ENCODE measurements at regions of chr14 and their contacts with region 1.

Region 1: DNA sequence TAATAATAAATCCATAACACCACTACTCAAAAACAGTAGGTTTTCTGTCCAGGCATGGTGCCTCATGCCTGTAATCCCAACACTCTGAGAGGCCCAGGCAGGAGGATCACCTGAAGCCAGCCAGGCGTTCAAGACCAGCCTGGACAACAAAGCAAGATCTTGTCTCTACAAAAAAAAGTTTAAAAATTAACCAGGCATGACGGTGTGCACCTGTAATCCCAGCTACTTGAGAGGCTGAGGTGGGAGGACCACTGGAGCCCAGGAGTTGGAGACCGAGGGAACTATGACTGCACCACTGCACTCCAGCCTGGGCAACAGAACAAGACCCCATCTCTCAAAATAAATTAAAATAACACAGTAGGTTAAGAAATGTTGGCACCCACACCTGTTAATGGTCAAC is 44.5 kb upstream of the AP4S1 start:
- DNase-seq: peak in 1 of 2 experiments; percentile 8
- H3K4me3 ChIP-seq: no peak overlapping the region
- H3K4me3 Mint-ChIP-seq: no peak overlapping the region
- H3K27ac Mint-ChIP-seq: no peak overlapping the region
- H3K4me1 ChIP-seq: peaks cover 9% of the 10 kb centered on the region; the same call in 1 of the 2 replicates
- H3K4me1 Mint-ChIP-seq: no peaks in the 10 kb centered on the region
- H3K27me3 ChIP-seq: no peaks in the 10 kb centered on the region
- H3K27me3 Mint-ChIP-seq: no peaks in the 10 kb centered on the region
- CTCF ChIP-seq: no peak

Region 2: GRCh38 chr14:31026395-31027118 is 45.6 kb after region 1 on chr14:
- CTCF ChIA-PET with region 1: no interaction called
- POLR2A ChIA-PET with region 1: interaction called, 6 read pairs
- intact Hi-C with region 1: loop called (anchors 2 kb)
- DNase-seq: peak; percentile 97
- H3K4me3 ChIP-seq: peak overlapping the region; percentile 88
- H3K4me3 Mint-ChIP-seq: peak overlapping the region; percentile 100
- H3K27ac Mint-ChIP-seq: peak overlapping the region; percentile 94
- H3K4me1 ChIP-seq: peaks cover 10% of the 10 kb centered on the region
- H3K4me1 Mint-ChIP-seq: peaks cover 20% of the 10 kb centered on the region
- H3K27me3 ChIP-seq: no peaks in the 10 kb centered on the region
- H3K27me3 Mint-ChIP-seq: no peaks in the 10 kb centered on the region
- CTCF ChIP-seq: no peak